ENCODE measurements at regions of chr5 and their contacts with region 1.

Region 1: DNA sequence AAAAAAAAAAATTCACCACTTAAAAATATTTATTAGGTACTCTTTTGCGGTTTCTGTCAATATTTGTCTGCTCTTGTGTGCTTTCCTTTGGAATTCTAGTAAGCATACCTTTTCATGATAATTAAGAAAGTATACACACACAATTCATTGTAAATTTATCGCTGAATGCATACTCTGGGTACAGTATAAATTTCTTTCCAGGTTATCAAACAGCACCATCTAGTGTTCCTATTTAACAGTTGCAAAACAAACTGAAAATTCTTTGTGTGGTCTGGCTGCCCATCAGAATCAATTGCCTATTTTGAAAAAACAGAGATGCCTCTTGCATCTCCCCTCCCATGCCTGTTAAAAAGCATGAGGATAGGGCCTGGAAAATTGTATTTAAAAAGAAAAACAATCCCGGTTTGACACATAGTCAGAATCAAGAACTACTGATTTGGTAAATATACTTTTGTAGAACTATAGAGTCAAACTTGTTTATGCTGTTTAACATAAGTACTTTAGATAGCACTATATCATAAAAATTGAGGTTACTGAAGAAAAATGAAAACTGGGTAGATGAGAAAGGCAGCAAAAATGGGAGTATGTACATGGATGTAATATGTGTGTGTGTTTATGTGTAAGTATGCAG is 16.2 kb downstream of the PGGT1B start:
- DNase-seq: no peak
- ATAC-seq: peak in 1 of 2 donors; percentile 21
- H3K4me3 ChIP-seq: no peak overlapping the region
- H3K27ac ChIP-seq: no peak overlapping the region
- H3K4me1 ChIP-seq: peaks cover 4% of the 10 kb centered on the region
- H3K27me3 ChIP-seq: no peaks in the 10 kb centered on the region

Region 2: GRCh38 chr5:115098041-115098702 is 148.3 kb before region 1 on chr5:
- intact Hi-C with region 1: loop called in 1 of 4 experiments (anchors 10 kb)
- DNase-seq: no peak
- ATAC-seq: peak in 1 of 2 donors; percentile 48
- H3K4me3 ChIP-seq: no peak overlapping the region
- H3K27ac ChIP-seq: no peak overlapping the region
- H3K4me1 ChIP-seq: no peaks in the 10 kb centered on the region
- H3K27me3 ChIP-seq: no peaks in the 10 kb centered on the region

Region 3: DNA sequence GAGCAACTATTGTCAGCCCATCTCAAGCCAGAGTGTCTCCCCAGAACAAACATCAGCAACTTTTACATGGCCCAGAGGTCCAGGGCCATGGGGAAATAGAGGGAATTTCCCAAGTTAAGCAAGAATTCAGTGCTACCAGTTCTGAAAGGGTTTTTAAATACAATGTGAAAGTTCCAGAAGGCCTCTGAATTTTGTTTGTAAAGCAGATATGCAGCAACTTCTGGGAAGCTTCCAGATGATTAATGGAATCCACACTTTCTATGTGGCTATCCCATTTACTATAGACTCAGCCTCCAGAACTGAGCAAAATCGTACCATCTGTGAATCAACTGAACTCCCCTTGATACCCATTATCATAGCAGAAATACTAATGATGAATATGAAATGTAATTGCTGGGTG is 204.3 kb after region 1 on chr5:
- intact Hi-C with region 1: no loop called
- DNase-seq: no peak
- ATAC-seq: peak; percentile 63 to 72
- H3K4me3 ChIP-seq: no peak overlapping the region
- H3K27ac ChIP-seq: no peak overlapping the region
- H3K4me1 ChIP-seq: peaks cover 7% of the 10 kb centered on the region
- H3K27me3 ChIP-seq: no peaks in the 10 kb centered on the region

Measured in right cardiac atrium (tissue), 5 donors.